ENCODE measurements at regions of chr13 and their contacts with region 1.

Region 1: GRCh38 chr13:28257305-28257704 is 119.0 kb downstream of the PAN3 start:
- DNase-seq: no peak
- H3K4me3 ChIP-seq: no peak overlapping the region
- H3K27ac ChIP-seq: no peak overlapping the region
- H3K4me1 ChIP-seq: peaks cover 5 to 34% (median 13%) of the 10 kb centered on the region in 4 experiments
- H3K27me3 ChIP-seq: no peaks in the 10 kb centered on the region

Region 2: GRCh38 chr13:28239374-28239773 is 17.9 kb before region 1 on chr13:
- CTCF ChIA-PET with region 1: interaction called, 11 read pairs
- POLR2A ChIA-PET with region 1: no interaction called
- DNase-seq: no peak
- H3K4me3 ChIP-seq: no peak overlapping the region
- H3K27ac ChIP-seq: peak overlapping the region in 1 of 2 experiments; percentile 7
- H3K4me1 ChIP-seq: peaks cover 0 to 7% (median 0%) of the 10 kb centered on the region in 4 experiments
- H3K27me3 ChIP-seq: no peaks in the 10 kb centered on the region